GM10248 (cell line): ENCODE measurements at regions of chr9 and their contacts with region 1.

Region 1: GRCh38 chr9:91422758-91423711 is 597 bp downstream of the NFIL3 start:
- DNase-seq: peak; percentile 58
- CTCF ChIP-seq: peak; percentile 38

Region 2: DNA sequence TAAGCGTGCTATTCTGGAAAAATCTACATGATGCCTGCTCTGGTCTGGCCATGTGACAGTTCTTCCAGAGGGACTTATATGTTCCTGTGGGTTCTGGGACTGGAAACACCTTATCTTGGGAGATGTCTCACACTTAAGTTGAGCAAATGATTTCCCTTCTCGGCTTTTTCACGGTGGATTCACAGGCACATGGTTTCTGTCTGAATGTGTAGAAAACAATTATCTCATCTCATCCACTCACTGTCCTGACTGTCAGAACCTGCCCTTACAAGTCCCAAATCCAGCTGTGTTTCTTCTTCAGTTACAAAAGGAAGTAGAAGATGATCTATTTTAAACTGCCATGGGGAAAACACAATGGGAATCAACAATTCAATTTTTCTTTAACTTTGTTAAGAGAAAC is 437.4 kb before region 1 on chr9:
- CTCF ChIA-PET with region 1: interaction called, 10 read pairs
- POLR2A ChIA-PET with region 1: no interaction called
- DNase-seq: no peak
- CTCF ChIP-seq: no peak

Region 3: DNA sequence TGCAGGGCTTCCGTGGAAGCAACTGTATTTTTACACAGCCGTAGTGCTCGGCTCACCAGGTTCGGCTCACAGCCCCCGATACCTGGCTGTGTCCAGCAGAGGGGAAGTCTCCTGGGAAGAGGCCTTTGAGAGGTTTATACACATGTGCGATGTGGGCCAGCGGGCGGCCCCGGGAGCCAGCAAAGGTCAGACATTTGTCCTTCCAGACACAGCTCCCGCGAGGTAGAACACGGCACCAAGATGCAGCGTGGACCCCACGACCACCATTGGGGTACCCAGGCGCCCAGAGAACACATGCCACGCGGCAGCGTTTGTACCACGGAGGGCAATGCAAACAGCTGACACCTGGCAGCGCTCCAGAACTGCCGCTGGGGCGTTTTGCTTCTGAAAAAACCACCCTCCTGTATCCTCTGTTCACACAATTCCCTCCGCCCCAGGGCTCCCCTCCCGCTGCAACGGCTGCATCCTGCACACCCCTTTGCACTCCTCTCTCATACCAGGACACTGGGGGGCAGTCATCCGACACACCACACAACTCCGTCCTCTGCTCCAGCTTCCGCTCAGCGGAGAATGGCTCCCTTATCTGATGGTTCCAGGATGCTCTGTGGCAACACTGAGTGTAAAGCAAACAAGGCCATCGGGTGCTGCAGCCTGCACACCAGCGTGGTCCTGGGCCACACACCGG is 386.1 kb before region 1 on chr9:
- CTCF ChIA-PET with region 1: interaction called, 53 read pairs
- POLR2A ChIA-PET with region 1: no interaction called
- DNase-seq: peak; percentile 57
- CTCF ChIP-seq: peak; percentile 47

Region 4: DNA sequence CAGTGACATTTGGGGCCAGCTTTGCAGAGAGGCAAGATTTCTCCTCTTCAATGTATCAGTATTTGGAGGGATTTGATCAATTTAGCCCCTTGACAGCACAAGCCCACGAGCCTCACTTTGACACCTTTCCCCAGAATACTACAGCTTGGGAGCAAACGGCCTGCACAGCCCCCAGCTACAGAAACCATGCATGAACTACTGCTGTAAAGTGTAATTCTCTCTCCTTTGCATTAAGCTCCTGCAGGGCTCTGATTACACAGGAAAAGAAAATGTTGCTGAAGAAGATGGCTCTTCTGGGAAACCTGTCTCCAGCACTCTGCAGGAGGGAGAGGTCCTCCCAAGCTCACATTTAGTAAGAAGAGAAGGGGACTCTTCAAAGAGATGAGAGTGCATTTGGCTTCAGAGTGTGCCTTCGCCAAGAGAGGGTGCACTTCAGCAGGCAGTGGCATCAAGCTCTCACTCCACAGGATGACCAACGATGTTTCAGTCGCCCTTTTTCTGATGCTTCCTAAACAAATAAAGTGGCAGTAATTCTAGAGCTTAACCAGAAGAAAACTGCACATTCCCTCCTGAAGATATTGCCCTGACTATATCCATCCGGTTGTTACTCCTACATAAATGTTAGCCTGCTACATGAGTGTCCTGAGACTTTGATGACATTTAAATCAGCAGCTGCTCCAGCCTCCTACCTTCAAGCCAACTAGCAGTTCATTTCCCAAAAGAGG is 333.5 kb before region 1 on chr9:
- CTCF ChIA-PET with region 1: interaction called, 22 read pairs
- POLR2A ChIA-PET with region 1: no interaction called
- DNase-seq: peak; percentile 24
- CTCF ChIP-seq: peak; percentile 61

Region 5: DNA sequence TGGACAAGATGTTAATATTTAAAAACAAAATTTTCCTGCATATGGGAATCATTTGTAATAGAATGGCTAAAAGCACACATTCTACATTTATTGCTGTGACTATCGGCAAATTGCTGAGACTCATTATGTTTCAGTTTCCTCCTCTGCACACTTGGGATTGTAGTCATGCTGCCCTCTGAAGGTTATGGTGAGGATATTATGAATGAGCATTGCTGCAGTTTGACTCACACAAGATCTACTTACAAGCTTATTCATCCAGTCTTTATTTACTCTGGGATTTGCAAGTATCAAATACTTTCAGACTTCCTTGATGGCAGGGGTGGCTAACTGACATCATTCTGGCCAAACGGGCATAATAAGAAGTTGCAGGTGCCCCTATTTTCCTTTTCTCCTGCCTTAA is 10.1 kb after region 1 on chr9:
- CTCF ChIA-PET with region 1: interaction called, 15 read pairs
- POLR2A ChIA-PET with region 1: no interaction called
- DNase-seq: peak; percentile 36
- CTCF ChIP-seq: peak; percentile 45